Activated CD8-positive, alpha-beta T cell treated with anti-CD3 and anti-CD28 coated beads for 36 hours (primary cell): ENCODE measurements at regions of chr2 and their contacts with region 1.

Region 1: GRCh38 chr2:203949228-203949627 is 12.7 kb downstream of the ICOS start:
- DNase-seq: no peak
- ATAC-seq: peak; percentile 68
- H3K4me3 Mint-ChIP-seq: peak overlapping the region; percentile 36
- H3K27ac Mint-ChIP-seq: peak overlapping the region; percentile 83
- H3K4me1 Mint-ChIP-seq: peaks cover 85% of the 10 kb centered on the region
- H3K27me3 Mint-ChIP-seq: no peaks in the 10 kb centered on the region
- CTCF ChIP-seq: no peak

Region 2: GRCh38 chr2:203887677-203888076 is 61.6 kb before region 1 on chr2:
- CTCF ChIA-PET with region 1: no interaction called
- POLR2A ChIA-PET with region 1: no interaction called
- intact Hi-C with region 1: no loop called
- DNase-seq: no peak
- ATAC-seq: no peak
- H3K4me3 Mint-ChIP-seq: no peak overlapping the region
- H3K27ac Mint-ChIP-seq: no peak overlapping the region
- H3K4me1 Mint-ChIP-seq: peaks cover 57% of the 10 kb centered on the region
- H3K27me3 Mint-ChIP-seq: no peaks in the 10 kb centered on the region
- CTCF ChIP-seq: no peak

Region 3: DNA sequence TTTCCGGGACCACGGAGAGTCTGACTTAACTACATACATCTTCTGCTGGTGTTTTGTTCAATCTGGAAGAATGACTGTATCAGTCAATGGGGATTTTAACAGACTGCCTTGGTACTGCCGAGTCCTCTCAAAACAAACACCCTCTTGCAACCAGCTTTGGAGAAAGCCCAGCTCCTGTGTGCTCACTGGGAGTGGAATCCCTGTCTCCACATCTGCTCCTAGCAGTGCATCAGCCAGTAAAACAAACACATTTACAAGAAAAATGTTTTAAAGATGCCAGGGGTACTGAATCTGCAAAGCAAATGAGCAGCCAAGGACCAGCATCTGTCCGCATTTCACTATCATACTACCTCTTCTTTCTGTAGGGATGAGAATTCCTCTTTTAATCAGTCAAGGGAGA is 10.4 kb after region 1 on chr2:
- CTCF ChIA-PET with region 1: interaction called, 3 read pairs
- POLR2A ChIA-PET with region 1: interaction called, 10 read pairs
- intact Hi-C with region 1: no loop called
- DNase-seq: no peak
- ATAC-seq: no peak
- H3K4me3 Mint-ChIP-seq: no peak overlapping the region
- H3K27ac Mint-ChIP-seq: no peak overlapping the region
- H3K4me1 Mint-ChIP-seq: peaks cover 30% of the 10 kb centered on the region
- H3K27me3 Mint-ChIP-seq: no peaks in the 10 kb centered on the region
- CTCF ChIP-seq: no peak

Region 4: DNA sequence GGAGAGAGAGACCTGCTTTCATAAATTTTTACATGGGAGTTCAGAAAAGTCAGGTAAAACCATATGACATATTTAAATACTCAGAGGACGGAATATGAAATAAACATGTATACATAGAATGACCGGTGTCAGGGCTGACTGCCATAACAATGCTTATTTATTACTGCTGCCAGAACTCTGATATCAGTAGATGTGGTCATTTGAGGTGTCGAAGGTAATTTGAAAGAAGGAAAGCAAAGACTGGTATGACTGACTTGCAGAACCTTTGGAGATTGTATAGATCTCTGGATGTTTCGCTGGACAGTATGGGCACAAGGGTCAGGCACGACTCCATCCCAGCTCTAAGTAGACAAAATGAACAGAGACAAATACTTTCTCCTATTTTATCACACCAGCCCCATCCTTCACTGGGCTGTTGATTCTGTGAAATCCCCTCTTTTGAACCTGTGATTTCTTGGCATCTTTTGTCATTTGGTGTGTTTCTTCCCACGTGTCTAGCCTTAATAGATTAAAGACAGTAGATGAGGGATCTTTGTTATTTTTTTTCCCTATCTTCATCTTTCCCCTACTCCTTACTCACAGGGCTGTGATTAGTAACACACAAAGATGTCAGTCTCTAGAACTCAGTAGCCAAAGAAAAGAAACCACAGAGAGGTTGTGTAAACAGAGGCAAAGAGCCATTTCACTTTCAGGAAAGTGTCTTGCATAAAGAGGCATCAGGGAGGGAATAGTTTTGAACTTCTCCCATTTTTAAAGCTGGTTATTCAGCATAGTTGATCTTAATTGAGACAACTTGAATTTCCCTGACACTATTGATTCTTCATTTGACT is 49.0 kb after region 1 on chr2:
- CTCF ChIA-PET with region 1: interaction called, 4 read pairs
- POLR2A ChIA-PET with region 1: interaction called, 7 read pairs
- intact Hi-C with region 1: loop called (anchors 2 kb)
- DNase-seq: no peak
- ATAC-seq: peak; percentile 52
- H3K4me3 Mint-ChIP-seq: peak overlapping the region; percentile 4
- H3K27ac Mint-ChIP-seq: peak overlapping the region; percentile 47
- H3K4me1 Mint-ChIP-seq: peaks cover 74% of the 10 kb centered on the region
- H3K27me3 Mint-ChIP-seq: no peaks in the 10 kb centered on the region
- CTCF ChIP-seq: no peak

Region 5: GRCh38 chr2:204104811-204105210 is 155.6 kb after region 1 on chr2:
- CTCF ChIA-PET with region 1: no interaction called
- POLR2A ChIA-PET with region 1: no interaction called
- intact Hi-C with region 1: no loop called
- DNase-seq: peak; percentile 21
- ATAC-seq: peak; percentile 52
- H3K4me3 Mint-ChIP-seq: no peak overlapping the region
- H3K27ac Mint-ChIP-seq: peak overlapping the region; percentile 86
- H3K4me1 Mint-ChIP-seq: peaks cover 57% of the 10 kb centered on the region
- H3K27me3 Mint-ChIP-seq: no peaks in the 10 kb centered on the region
- CTCF ChIP-seq: no peak